BJ (cell line): ENCODE measurements at regions of chr2 and their contacts with region 1.

Region 1: DNA sequence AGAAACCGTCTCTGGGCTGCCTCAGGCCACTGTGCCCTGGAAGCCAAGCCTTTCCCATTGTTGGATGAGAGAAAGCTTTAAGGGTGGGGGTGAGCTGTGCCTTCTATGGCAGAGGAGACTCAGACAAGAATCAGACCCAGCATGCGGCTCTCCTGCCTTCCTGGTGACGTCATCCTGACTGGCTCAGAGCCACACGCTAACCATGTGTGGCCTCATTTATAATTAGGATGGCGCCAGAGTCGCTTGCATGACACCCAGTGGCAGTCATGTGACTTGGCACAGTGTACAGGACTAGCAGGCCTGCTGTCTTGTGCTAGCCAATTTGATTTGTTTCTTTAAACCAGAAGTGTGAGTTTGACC is 99.2 kb downstream of the SH3BP4 start:
- DNase-seq: peak; percentile 83
- H3K4me3 ChIP-seq: no peak overlapping the region
- H3K27me3 ChIP-seq: no peaks in the 10 kb centered on the region
- CTCF ChIP-seq: no peak

Region 2: GRCh38 chr2:234981197-234982117 is 69.5 kb before region 1 on chr2:
- CTCF ChIA-PET with region 1: no interaction called
- POLR2A ChIA-PET with region 1: interaction called, 16 read pairs
- DNase-seq: peak; percentile 99
- H3K4me3 ChIP-seq: no peak overlapping the region
- H3K27me3 ChIP-seq: no peaks in the 10 kb centered on the region
- CTCF ChIP-seq: no peak

Region 3: DNA sequence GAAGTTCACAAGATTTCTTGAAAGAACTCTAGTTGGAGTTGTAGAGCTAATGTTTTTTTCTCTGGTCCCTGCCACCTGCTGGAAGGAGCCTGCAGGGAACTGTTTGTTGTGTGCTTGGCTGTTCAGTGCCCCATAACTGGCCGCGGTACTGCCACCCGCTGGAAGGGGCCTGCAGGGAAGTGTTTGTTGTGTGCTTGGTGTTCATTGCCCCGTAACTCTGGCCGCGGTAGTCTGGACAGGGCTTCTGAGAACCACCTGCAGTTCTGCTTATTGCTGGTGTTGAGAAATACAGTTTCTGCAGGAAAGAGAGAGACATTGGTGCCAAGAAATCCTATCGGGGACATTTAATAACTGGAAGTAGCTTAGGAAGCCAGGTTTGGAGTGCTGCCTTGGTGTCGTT is 501.0 kb after region 1 on chr2:
- CTCF ChIA-PET with region 1: no interaction called
- POLR2A ChIA-PET with region 1: no interaction called
- DNase-seq: no peak
- H3K4me3 ChIP-seq: no peak overlapping the region
- H3K27me3 ChIP-seq: no peaks in the 10 kb centered on the region
- CTCF ChIP-seq: peak; percentile 55